Aorta (tissue), 5 donors: ENCODE measurements at regions of chr11 and their contacts with region 1.

Region 1: DNA sequence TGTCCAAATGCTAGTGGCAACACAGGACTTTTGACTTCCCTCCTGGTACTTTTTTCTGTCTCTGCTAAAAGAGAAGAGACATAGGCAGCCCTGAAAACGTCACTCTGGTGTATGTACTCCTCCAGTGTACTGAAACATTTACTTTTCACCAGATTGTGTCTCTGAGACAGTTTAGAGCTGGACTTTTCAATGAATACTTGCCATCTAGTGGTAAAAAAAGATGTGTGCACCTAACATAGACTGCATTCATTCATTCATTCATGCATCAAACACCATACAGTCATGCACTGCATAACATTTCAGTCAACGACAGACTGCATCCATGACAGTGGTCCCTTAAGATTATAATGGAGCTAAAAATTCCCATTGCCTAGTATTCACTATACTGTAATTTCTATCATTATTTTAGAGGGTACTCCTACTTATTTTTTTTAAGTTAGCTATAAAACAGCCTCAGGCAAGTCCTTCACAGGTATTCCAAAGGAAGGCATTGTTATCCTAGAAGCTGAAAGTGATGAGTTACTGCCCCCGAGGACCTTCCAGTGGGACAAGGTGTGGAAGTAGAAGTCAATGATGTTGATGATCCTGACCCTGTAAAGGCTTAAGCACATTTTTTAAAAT is 186.2 kb downstream of the SPON1 start:
- DNase-seq: no peak
- ATAC-seq: peak; percentile 71
- H3K4me3 ChIP-seq: no peak overlapping the region
- H3K27ac ChIP-seq: no peak overlapping the region
- H3K4me1 ChIP-seq: no peaks in the 10 kb centered on the region
- H3K27me3 ChIP-seq: no peaks in the 10 kb centered on the region

Region 2: GRCh38 chr11:14073849-14074476 is 74.8 kb before region 1 on chr11:
- intact Hi-C with region 1: no loop called
- DNase-seq: no peak
- ATAC-seq: peak; percentile 36
- H3K4me3 ChIP-seq: no peak overlapping the region
- H3K27ac ChIP-seq: no peak overlapping the region
- H3K4me1 ChIP-seq: peaks cover 0 to 1% of the 10 kb centered on the region in 2 donors
- H3K27me3 ChIP-seq: no peaks in the 10 kb centered on the region

Region 3: DNA sequence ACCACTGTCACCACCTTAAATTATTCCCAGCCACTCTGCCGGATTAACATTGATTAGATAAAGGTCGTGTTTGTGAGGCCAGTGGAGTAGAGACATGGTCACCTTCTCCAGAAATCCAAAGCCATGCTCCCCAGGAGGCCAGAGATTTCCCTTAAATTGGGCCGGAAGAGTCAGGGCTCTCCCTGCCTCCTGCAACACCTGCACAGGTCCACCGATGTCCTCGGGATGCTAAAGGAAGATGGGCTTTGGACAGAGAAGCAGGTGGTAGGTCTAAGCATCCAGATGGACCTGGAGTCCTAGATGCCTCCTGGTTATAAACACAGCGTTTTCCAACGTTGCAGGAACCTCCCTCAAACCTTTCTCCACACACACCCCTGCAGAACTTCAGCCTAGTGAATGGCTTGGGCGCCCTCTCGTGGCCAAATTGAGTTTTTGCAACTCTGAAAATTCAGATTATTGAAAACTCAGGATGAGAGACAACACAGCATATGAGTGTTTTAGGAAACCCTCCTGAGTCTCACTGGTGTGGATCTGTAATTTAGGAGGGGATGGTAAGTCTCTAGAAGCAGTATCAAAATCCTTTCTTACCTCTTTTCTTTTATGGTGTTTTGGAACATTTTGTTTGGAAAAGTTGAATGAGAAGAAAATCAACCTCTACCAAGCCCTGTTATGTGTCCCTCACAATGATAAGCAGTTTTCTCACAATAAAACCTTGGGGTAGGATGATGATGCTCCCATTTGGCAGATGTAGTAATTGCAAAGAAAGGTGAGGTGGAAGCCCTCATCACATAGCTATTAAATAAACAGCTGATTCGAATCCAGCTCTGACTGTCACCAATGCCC is 100.6 kb after region 1 on chr11:
- intact Hi-C with region 1: loop called (anchors 5 to 10 kb)
- DNase-seq: peak; percentile 64 to 87
- ATAC-seq: peak; percentile 62
- H3K4me3 ChIP-seq: no peak overlapping the region
- H3K27ac ChIP-seq: no peak overlapping the region
- H3K4me1 ChIP-seq: no peaks in the 10 kb centered on the region
- H3K27me3 ChIP-seq: no peaks in the 10 kb centered on the region